Posterior vena cava (tissue), 2 donors: ENCODE measurements at regions of chr11 and their contacts with region 1.

Region 1: DNA sequence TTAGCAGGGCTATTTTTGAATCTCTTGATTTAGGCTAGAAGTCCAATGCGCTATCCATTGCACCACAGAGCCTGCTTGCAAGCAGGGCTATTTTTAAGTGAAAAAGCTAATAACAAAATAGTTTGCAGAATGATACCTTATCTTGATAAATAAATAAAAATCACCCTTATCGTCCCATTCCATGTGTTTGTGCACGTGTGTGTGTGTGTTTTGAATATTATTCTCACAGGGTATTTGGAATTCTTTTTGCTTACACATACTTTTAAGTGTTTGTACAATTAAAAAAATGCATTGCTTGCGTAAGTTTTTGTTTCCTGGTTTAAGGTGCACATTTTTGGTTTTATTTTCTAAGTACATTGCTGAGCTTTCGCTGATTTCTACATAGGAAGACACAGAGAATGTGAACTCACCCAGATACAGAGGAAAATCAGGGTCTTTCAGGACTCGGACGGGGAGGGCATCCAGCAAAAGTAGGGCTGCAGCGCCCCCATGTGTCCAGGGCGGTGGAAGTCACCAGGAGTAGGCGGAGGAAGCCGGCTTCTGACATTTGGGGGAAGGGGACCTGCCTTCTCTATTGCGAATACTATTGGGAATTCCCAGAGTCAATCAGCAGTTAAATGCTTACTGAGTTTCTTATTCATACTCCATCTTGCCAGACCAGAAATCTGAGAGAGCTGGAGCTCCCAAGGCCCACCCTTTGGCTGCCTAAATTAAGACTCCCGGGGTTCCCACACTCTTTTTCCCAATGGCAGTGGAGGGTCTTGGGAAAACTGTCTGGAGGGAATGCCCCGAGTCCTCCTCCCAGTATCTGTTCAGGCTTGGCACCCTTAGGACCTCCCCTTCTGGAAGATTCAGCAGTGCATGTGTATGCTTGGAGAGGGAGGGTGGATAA is 27.2 kb downstream of the SLC1A2 start:
- DNase-seq: peak; percentile 95

Region 2: DNA sequence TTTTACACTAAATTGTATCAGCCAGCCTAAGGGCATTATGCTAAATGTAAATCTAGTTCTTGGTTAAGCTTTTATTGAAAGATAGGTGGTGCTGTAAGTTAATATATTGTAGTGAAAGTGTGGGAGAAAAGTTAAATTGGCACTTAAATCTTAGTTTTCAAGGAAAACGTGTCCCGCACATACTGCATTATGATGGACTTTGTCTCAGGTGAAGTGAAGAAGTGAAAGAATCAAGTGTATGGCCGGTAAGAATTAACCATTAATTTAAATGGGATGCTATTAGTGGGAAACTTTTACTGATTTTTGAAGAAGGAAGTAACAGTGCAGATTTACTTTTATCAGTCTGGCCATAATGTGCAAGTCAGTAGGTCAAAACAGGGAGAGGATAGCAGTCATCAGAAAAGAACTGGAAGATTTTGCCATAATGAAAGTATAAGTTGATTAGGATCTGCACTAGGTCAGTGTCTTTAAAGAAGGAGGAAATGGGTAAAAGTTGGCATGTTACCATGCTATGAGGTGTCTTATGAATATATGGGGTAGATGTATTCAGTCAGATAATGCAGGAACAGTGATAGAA is 394.1 kb before region 1 on chr11:
- intact Hi-C with region 1: loop called in 1 of 2 experiments (anchors 5 kb)
- DNase-seq: no peak

Region 3: DNA sequence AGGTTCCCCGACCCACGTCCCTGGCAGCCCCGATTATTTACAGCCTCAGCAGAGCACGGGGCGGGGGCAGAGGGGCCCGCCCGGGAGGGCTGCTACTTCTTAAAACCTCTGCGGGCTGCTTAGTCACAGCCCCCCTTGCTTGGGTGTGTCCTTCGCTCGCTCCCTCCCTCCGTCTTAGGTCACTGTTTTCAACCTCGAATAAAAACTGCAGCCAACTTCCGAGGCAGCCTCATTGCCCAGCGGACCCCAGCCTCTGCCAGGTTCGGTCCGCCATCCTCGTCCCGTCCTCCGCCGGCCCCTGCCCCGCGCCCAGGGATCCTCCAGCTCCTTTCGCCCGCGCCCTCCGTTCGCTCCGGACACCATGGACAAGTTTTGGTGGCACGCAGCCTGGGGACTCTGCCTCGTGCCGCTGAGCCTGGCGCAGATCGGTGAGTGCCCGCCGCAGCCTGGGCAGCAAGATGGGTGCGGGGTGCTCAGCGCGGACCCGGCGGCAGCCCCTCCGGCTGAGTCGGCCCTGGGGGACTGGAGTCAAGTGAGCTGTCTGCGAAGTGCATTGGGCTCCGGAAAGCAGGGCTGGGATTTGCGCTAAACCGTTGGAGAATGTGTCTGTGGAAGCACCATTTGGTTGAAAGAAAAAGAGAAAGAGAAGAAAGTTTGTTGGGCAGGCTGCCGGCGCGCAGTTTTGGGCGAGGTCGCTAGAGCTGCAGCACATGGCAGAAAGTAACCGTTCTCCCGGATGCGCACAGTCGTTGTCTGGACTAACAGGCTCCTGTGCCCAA is 253.0 kb before region 1 on chr11 and contains the start of gene CD44:
- intact Hi-C with region 1: loop called in 1 of 2 experiments (anchors 10 kb)
- DNase-seq: peak; percentile 94
- total RNA-seq, gene CD44: 219 to 562 TPM

Region 4: DNA sequence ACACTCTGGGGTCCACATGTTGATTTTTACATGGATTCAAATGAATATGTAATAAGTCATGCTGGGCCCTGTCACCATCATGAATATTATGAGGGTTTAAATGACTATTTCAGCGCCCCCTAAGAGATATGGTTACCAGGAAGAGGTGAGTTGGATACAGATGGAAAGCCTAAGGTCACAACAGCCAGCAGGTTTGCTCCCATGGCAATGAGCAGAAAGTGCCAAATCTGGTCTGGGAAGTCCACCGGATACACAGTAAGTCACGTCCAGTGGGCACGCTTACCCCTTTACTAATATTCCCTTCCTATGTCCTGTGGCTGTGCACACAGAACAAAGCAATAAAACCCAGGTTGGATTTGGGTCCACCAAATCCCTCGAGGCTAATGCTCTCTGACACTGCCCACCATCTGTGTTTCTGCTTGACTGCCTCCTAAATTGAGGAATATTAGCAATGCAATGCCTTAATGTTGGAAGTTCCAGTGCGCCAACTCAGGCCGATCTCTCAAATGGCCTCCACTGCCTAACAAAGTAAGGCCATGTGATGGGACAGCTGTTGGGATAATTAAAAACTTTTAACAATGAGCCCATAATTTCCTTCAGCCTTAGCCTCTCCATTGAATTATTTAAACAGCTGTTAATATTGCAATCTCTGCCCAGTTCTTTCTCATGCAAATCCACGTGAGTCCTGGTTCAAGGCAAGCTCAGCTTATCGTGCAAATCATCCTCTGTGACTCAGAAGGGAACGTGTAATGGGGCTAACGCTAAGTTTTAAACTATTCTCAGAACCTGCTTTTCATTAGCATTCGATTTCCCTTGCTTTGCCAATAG is 70.4 kb before region 1 on chr11:
- intact Hi-C with region 1: no loop called
- DNase-seq: no peak

Region 5: DNA sequence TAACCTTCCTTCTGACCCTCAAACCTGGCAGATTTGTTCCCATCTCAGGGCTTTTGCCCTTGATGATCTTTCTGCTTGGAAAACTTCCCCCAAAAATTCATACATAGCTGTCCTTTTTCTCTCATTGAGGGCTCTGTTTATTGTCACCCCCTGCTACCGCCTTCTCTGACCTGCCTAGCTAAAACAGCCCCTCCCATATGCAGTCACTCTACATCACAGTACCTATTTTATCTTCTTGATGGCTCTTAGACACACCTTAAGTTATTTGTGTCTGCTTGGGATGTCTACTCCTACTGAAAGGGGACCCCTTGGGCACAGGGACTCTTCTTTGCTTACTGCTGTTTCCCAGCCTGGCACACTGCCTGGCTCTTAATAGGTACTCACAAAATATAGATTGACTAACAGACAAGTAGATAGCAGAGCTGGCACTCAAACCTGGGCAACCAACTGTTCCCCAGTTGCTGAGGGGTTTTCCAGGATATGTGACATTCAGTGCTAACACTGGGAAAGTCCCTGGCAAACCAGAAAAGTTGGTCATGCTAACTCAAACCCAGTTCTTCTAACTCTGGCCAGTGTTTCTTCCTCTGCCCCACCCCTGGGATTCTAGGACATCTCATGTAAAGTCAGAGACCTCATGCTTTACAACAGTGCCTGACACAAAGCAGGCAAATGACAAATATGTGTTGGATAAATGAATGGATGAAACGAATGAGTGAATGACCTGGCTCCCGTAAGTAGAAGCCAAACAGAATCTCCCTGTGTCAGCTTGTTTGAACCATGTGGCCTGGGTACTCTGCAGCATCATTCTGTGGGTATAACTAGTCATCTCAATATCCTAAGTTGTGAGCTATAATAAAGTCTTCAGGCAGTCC is 206.3 kb after region 1 on chr11:
- intact Hi-C with region 1: no loop called
- DNase-seq: no peak

Region 6: GRCh38 chr11:36488096-36488495 is 1095.9 kb after region 1 on chr11:
- intact Hi-C with region 1: no loop called
- DNase-seq: no peak